Activated T-helper 1 cell treated with anti-CD3 and anti-CD28 coated beads, Interleukin-12 subunit alpha, Interleukin-12 subunit beta, Interleukin-2, Interleukin-4 antibody, amounts not matched to agents 30 ng/mL and 10 ng/mL and 1 ng/mL, durations not matched to agents 14 hours and 24 hours and 36 hours (primary cell): ENCODE measurements at regions of chr1 and their contacts with region 1.

Region 1: GRCh38 chr1:212990276-212990675 is 25.4 kb downstream of the ANGEL2 start:
- DNase-seq: no peak
- H3K4me3 Mint-ChIP-seq: no peak overlapping the region
- H3K27ac Mint-ChIP-seq: no peak overlapping the region
- H3K4me1 Mint-ChIP-seq: peaks cover under 1% of the 10 kb centered on the region
- H3K27me3 Mint-ChIP-seq: no peaks in the 10 kb centered on the region

Region 2: GRCh38 chr1:212665241-212666115 is 324.8 kb before region 1 on chr1:
- intact Hi-C with region 1: loop called (anchors 1 kb)
- DNase-seq: peak; percentile 74
- H3K4me3 Mint-ChIP-seq: peak overlapping the region; percentile 82
- H3K27ac Mint-ChIP-seq: peak overlapping the region; percentile 70
- H3K4me1 Mint-ChIP-seq: peaks cover 24% of the 10 kb centered on the region
- H3K27me3 Mint-ChIP-seq: peaks cover 13% of the 10 kb centered on the region

Region 3: DNA sequence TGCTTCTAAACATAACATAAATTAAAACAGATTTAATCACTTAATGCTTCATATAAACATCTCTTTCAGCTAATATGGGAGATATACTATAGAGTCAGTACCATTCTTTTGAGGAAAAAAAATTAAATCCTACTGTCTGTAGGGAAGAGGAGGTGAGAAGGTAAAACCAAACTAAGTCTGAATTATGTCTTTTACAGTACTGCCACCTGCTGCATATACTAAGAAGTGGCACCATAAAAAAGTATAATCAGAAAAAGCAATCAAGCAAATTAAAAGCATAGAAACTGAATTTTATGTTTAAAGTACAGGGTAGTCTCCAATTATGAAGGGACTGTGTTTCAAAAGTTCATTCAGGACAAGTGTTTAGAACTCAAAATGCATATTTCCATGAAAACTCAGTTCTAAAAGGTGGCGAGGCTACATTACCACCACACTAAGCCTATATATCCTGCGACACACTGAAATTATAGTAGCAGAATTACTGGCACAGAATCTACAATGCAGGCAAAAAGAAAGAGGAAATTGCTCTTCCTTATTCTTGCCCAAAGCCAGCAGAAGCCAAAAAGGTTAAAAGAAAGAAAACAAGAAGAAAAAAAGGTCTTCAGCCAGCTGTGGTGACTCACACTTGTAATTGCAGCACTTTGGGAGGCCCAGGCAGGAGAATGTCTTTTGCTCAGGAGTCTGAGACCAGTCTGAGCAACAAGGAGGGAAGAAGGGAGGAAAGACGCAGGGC is 207.7 kb before region 1 on chr1:
- intact Hi-C with region 1: loop called (anchors 1 kb)
- DNase-seq: no peak
- H3K4me3 Mint-ChIP-seq: no peak overlapping the region
- H3K27ac Mint-ChIP-seq: no peak overlapping the region
- H3K4me1 Mint-ChIP-seq: peaks cover 4% of the 10 kb centered on the region
- H3K27me3 Mint-ChIP-seq: no peaks in the 10 kb centered on the region

Region 4: GRCh38 chr1:212814537-212815334 is 175.5 kb before region 1 on chr1:
- intact Hi-C with region 1: loop called (anchors 1 kb)
- DNase-seq: no peak
- H3K4me3 Mint-ChIP-seq: no peak overlapping the region
- H3K27ac Mint-ChIP-seq: no peak overlapping the region
- H3K4me1 Mint-ChIP-seq: peaks cover 4% of the 10 kb centered on the region
- H3K27me3 Mint-ChIP-seq: peaks cover 4% of the 10 kb centered on the region

Region 5: GRCh38 chr1:212928323-212929291 is 61.7 kb before region 1 on chr1:
- intact Hi-C with region 1: loop called (anchors 10 kb)
- DNase-seq: no peak
- H3K4me3 Mint-ChIP-seq: no peak overlapping the region
- H3K27ac Mint-ChIP-seq: no peak overlapping the region
- H3K4me1 Mint-ChIP-seq: no peaks in the 10 kb centered on the region
- H3K27me3 Mint-ChIP-seq: peaks cover 6% of the 10 kb centered on the region

Region 6: DNA sequence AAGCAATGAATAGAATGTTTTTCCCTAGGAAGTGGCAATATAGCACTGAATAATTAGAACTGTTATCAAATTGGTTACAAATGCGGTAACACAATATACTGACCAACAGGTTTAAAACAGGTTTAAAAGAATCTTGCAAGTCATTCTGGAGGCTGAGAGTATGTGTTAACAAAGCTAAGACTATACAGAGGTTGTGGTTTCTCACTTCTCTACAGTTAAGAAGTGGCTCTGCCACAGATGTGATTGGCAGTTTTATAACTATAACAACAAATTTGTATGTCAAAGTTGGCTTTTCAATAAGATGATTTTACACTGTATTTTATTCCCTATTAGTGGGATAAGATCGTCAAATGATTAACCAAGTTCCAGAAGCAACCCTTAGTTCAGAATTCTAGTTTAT is 18.3 kb after region 1 on chr1:
- intact Hi-C with region 1: no loop called
- DNase-seq: no peak
- H3K4me3 Mint-ChIP-seq: no peak overlapping the region
- H3K27ac Mint-ChIP-seq: no peak overlapping the region
- H3K4me1 Mint-ChIP-seq: peaks cover 40% of the 10 kb centered on the region
- H3K27me3 Mint-ChIP-seq: no peaks in the 10 kb centered on the region